ENCODE measurements at regions of chr20 and their contacts with region 1.

Region 1: GRCh38 chr20:1185790-1186334 is 1.1 kb upstream of the TMEM74B start:
- DNase-seq: peak in 2 of 3 donors; percentile 64 to 75
- ATAC-seq: peak; percentile 71 to 81 (median 76)
- H3K4me3 ChIP-seq: peak overlapping the region; percentile 45 to 59 (median 57)
- H3K27ac ChIP-seq: no peak overlapping the region
- H3K4me1 ChIP-seq: peaks cover 0 to 23% (median 8%) of the 10 kb centered on the region in 4 donors
- H3K27me3 ChIP-seq: no peaks in the 10 kb centered on the region
- CTCF ChIP-seq: peak; percentile 48 to 60 (median 56)
- POLR2A ChIP-seq: no peak

Region 2: DNA sequence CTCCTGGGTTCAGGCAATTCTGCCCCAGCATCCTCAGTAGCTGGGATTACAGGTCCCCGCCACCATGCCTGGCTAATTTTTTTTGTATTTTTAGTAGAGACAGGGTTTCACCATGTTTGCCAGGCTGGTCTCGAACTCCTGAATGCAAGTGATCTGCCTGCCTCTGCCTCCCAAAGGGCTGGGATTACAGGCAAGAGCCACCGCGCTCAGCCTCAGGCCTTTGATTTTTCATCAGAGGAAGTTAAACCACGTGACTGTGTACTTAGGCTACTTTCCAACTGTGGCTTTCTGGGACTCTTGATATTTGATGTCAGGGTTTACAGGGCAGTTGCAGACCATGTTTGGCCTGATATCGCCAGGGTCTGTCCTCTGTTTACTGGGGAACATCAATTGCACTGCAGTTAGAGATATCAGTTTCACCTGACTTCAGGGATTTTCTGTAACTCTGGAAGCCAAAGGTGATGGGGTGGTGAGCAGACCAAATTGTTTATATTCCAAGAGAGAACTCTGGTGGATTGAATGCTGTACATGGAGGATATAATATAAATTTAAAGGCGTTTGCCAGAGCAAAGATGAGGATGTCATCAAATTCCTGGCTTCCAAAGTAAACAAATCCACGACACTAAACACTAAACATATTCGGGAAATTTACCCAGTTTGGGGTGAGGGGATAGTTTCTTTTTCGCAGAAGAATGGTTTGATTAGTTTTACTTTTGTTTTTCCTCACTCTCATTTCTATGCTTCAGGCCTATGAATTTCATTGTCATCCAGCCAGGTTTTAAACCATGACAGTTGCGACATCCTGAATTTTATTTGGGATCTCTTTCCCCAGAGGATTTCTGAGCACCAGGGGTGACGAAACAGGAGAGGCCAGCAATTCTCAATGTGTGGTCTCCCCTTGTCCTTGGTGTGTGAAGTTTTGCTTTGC is 63.2 kb before region 1 on chr20:
- intact Hi-C with region 1: loop called (anchors 5 to 10 kb)
- DNase-seq: peak; percentile 71 to 85 (median 78)
- ATAC-seq: peak; percentile 65 to 77 (median 70)
- H3K4me3 ChIP-seq: peak overlapping the region in 2 of 3 donors; percentile 31 to 37
- H3K27ac ChIP-seq: peak overlapping the region; percentile 55 to 97 (median 92)
- H3K4me1 ChIP-seq: peaks cover 0 to 54% (median 16%) of the 10 kb centered on the region in 4 donors
- H3K27me3 ChIP-seq: no peaks in the 10 kb centered on the region
- CTCF ChIP-seq: no peak
- POLR2A ChIP-seq: peak; percentile 59

Measured in right lobe of liver (tissue), 6 donors.